Left colon (tissue), 2 donors: ENCODE measurements at regions of chr1 and their contacts with region 1.

Region 1: DNA sequence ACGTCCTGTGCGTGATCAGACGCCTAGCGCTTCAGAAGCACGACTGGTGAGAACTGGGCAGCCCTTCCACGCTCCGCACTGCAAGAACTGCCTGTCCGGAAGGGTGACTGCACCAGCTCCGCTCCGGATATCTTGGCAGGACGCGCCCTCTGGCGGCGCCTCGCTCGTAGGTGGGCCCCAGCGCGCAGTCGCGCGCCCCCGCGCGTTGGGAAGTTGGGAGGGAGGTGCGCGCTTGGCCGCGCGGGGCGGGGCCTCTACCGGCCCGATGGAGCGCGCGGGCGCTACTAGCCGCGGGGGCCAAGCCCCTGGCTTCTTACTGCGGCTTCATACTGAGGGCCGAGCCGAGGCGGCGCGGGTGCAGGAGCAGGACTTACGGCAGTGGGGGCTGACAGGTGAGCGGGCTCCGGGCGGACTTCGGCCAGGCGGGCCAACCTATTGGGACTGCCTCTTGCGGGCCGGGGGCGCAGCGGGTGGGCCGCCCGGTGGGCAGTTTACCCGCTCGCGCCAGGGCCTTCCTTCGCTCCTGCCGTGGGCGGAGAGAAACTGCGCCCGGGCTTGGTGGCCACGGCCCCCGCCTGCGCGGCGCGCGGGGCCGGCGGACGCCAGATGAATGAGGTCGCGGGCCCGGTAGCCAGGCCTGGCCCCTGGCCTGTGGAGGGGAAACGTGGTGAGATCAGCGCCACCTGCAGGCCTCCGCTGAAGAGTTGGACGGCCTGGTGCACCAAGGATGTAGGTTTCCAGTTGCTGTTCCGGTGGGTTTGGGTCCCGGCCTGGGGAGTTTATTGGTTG is at the start of gene CHD1L:
- DNase-seq: peak; percentile 95 to 98
- ATAC-seq: peak; percentile 87
- total RNA-seq, gene CHD1L: 34.9 to 37.4 TPM

Region 2: DNA sequence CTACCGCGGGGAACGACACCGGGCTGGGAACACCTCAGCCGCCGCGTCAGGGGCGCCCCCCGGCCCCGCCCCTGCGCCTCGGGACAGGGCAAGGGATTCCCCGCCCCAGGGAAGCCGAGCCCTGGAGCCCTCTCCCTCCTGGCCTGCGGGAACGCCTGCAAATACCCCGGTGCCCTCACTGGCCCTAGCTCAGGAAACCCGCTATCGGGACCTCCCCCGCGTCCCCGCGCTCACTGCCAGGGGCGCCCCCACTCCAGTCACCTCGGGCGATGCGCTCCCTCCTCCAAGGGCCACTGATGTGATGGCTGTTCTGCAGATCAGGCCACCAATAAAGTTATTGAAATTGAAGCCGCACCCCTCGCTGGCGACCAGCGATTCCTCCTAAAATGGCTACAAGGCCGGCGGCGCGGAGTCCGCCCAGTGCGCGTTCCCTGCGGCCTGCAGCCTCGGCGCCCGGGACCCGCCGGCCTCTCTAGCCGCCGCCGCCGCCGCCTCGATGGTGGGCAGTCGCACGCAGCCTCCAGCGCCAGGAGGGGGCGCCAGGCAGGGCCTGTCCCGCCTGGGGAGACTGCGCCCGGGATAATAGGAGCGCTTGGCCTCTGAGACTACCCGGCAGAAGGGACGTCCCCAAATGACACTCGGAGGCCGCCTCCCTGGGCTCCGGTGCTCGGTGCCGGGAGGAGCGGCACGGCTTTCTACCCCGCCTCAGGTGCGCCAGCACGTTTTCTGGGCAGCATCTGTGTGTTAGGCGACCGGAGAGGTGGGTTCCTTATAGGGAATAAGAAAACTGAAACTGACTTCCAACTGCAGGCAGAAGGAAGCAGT is 70.3 kb before region 1 on chr1 and contains the start of gene PRKAB2:
- intact Hi-C with region 1: loop called (anchors 5 kb)
- DNase-seq: peak; percentile 96 to 97
- ATAC-seq: peak; percentile 87
- total RNA-seq, gene PRKAB2: 12.2 to 23.9 TPM

Region 3: DNA sequence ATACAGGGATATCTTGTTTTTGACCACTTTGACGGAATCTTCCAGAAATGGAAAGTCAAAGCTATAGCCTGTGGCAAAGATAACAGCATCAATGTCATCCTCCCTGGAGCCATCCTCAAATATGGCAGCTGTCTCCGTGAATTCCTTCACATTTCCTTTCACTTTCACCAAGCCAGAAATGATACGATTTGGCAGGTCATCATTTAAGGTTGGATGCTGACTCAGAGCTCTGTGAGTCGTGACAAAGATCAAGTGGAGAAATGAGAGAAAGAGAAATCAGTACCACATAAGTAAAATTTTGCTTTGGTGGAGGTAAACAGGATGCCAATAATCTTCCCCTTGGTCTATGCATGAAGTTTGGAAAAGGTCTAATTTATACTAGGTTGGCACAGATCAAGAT is 41.4 kb before region 1 on chr1:
- intact Hi-C with region 1: no loop called
- DNase-seq: no peak
- ATAC-seq: no peak

Region 4: GRCh38 chr1:147567594-147568381 is 325.2 kb after region 1 on chr1:
- intact Hi-C with region 1: no loop called
- DNase-seq: peak; percentile 21 to 27
- ATAC-seq: peak; percentile 64